ENCODE measurements at regions of chr11 and their contacts with region 1.

Region 1: DNA sequence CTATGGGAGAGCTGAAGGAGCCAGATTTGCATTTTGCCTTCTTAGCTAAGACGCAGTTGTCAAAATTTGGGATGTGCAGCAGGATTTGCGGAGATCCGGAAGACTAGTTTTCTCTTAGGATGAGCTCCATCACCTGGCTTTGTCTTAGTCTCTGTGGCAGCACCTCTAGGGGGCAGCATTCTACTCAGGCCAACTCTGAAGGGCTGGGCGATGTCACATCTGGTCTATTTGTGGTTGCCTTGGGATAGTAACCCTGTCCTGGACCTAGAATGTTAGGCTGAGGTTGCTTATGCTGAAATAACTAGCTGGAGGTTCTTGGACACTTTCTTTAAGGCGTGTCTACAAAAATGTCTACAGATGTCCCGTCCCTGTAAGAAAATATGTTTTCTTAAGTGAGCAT is 116.2 kb downstream of the FAT3 start:
- DNase-seq: peak; percentile 63
- H3K4me3 Mint-ChIP-seq: no peak overlapping the region
- H3K27ac Mint-ChIP-seq: no peak overlapping the region
- H3K4me1 Mint-ChIP-seq: peaks cover 15% of the 10 kb centered on the region
- H3K27me3 Mint-ChIP-seq: no peaks in the 10 kb centered on the region
- CTCF ChIP-seq: peak; percentile 58

Region 2: DNA sequence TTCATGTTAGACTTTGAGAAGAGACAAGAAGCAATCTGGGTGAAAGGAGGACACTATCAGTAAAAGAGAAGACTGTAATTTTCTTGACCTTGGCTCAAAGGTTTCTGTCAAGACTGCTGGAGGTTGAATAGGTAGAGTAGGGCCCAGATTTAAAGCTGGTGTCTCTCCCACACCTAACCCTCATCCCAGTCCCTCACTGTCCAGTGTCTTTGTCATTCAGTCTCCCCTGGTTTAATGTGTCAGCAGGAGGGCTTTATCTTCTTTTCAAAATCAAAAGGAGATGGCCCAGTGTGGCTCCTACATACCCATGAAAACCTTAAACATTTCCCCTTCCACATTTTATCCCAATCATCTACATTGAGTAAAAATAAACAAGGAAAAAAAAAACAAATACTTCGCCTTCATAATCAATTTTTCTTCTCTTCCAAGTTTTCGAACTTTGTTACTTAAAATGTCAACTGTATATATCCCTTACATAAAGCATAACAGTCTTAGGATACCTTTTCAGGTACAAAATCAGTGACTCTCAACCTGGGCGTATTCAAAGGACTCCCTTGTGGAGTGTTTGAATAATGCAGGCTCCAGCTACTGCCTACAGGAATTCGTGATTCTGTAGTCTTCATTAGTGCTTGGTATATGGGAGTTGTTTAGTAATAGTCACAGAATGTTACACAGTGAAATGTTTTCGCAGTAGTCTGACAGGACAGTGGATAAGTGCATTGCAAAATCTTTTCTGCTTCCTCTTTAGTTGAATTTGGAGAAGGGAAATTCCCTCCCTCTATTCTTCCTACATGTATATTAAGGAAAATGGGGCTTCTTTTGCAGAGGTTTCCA is 29.0 kb before region 1 on chr11:
- CTCF ChIA-PET with region 1: no interaction called
- POLR2A ChIA-PET with region 1: no interaction called
- intact Hi-C with region 1: no loop called
- DNase-seq: peak; percentile 59
- H3K4me3 Mint-ChIP-seq: no peak overlapping the region
- H3K27ac Mint-ChIP-seq: peak overlapping the region; percentile 93
- H3K4me1 Mint-ChIP-seq: peaks cover 28% of the 10 kb centered on the region
- H3K27me3 Mint-ChIP-seq: no peaks in the 10 kb centered on the region
- CTCF ChIP-seq: no peak

Region 3: DNA sequence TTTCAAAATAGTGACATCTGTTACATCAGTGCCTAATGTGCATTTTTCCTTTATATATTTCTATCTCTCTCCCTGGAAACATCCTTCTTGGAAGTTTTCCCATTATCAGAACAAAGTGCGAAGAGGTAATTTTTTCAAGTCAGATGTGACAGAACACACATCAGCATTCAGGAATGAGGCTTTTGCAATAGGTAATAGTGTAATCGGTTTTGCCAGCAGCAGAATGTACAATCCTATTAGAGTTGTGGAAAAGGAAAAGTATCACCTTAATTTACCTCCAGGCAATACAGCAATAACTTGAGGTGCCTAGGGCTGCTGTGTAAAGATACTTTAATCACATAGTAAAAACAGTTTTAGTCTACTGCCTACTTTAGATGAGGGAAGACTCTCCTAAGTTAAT is 159.7 kb after region 1 on chr11:
- CTCF ChIA-PET with region 1: interaction called, 3 read pairs
- POLR2A ChIA-PET with region 1: no interaction called
- intact Hi-C with region 1: loop called (anchors 10 kb)
- DNase-seq: peak; percentile 59
- H3K4me3 Mint-ChIP-seq: no peak overlapping the region
- H3K27ac Mint-ChIP-seq: no peak overlapping the region
- H3K4me1 Mint-ChIP-seq: peaks cover 39% of the 10 kb centered on the region
- H3K27me3 Mint-ChIP-seq: no peaks in the 10 kb centered on the region
- CTCF ChIP-seq: no peak

Measured in MCF 10A (cell line).